ENCODE measurements at regions of chr14 and their contacts with region 1.

Region 1: DNA sequence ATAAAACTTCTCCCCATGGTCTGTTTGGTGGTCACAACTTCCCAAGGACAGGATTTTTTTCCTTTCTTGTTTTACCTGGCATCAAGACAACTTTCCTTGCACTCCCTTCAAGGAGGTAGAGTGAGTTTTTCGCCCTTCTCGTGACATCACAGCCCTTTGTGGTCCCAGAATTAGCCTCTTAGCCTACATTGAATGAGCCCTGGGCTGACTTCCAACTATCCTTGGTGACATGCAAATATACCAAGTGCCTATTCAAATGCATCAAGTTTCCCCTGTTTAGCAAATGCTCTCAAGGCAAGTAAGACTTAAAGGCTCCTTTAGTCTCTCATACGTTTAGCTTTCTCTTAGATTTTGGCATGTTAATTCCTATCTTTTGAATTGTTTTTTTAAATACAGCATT is 36.6 kb downstream of the TC2N start:
- DNase-seq: peak; percentile 46
- H3K4me3 Mint-ChIP-seq: no peak overlapping the region
- H3K27ac Mint-ChIP-seq: peak overlapping the region; percentile 39
- H3K4me1 Mint-ChIP-seq: peaks cover 67% of the 10 kb centered on the region
- H3K27me3 Mint-ChIP-seq: no peaks in the 10 kb centered on the region

Region 2: GRCh38 chr14:91744068-91744483 is 86.7 kb before region 1 on chr14:
- CTCF ChIA-PET with region 1: no interaction called
- POLR2A ChIA-PET with region 1: no interaction called
- intact Hi-C with region 1: no loop called
- DNase-seq: peak; percentile 16
- H3K4me3 Mint-ChIP-seq: no peak overlapping the region
- H3K27ac Mint-ChIP-seq: no peak overlapping the region
- H3K4me1 Mint-ChIP-seq: peaks cover 2% of the 10 kb centered on the region
- H3K27me3 Mint-ChIP-seq: no peaks in the 10 kb centered on the region

Region 3: GRCh38 chr14:91796617-91797347 is 34.0 kb before region 1 on chr14:
- CTCF ChIA-PET with region 1: interaction called, 3 read pairs
- POLR2A ChIA-PET with region 1: no interaction called
- intact Hi-C with region 1: loop called (anchors 5 kb)
- DNase-seq: no peak
- H3K4me3 Mint-ChIP-seq: no peak overlapping the region
- H3K27ac Mint-ChIP-seq: peak overlapping the region; percentile 74
- H3K4me1 Mint-ChIP-seq: peaks cover 34% of the 10 kb centered on the region
- H3K27me3 Mint-ChIP-seq: no peaks in the 10 kb centered on the region

Measured in activated CD4-positive, alpha-beta memory T cell treated with anti-CD3 and anti-CD28 coated beads for 36 hours (primary cell).